Activated CD4-positive, alpha-beta memory T cell treated with anti-CD3 and anti-CD28 coated beads for 36 hours (primary cell): ENCODE measurements at regions of chr1 and their contacts with region 1.

Region 1: DNA sequence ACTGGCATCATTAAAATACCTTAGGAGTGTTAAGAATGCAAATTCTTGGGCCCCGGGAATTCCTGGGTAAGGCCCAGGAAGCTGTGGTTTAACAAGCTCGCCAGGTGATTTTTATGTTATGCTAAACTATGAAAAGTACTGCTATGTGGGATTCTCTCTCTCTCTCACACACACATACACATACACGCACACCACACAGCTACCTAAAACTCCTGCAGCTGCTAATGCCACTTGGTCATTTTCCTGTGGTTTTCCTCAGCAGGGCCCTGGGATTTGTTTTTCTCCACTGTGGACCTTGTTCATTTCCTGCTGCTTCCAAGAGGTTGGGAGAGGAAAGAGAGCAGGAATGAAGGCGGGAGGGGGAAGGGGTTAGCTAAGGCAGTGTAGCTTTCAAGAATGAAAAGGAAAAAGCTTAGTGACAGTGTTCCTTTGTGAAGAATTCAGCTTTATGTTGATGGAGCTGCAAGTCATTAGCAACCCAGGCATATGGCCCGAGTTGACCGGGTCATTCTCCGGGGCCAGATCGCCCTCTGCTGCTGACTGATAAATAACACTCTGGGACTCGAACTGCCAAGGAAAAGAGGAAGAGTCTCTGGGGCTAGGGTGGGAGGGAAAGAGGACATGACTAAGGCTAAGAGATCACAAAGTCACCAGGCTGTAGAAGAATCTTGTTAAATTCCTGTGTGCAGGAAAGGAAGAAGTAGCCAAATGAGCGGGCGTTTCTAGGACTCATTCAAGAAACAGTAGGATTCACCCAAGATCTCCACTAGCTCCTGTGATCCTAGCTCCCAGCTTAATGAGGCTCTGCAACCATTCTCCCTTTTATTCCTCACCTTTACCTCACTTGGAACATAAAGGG is 30.5 kb upstream of the LRIG2 start:
- DNase-seq: peak; percentile 55
- H3K4me3 Mint-ChIP-seq: no peak overlapping the region
- H3K27ac Mint-ChIP-seq: no peak overlapping the region
- H3K4me1 Mint-ChIP-seq: peaks cover 32% of the 10 kb centered on the region
- H3K27me3 Mint-ChIP-seq: no peaks in the 10 kb centered on the region

Region 2: GRCh38 chr1:112882271-112882744 is 160.2 kb before region 1 on chr1:
- CTCF ChIA-PET with region 1: interaction called, 38 read pairs
- POLR2A ChIA-PET with region 1: no interaction called
- intact Hi-C with region 1: loop called (anchors 1 kb)
- DNase-seq: no peak
- H3K4me3 Mint-ChIP-seq: no peak overlapping the region
- H3K27ac Mint-ChIP-seq: no peak overlapping the region
- H3K4me1 Mint-ChIP-seq: no peaks in the 10 kb centered on the region
- H3K27me3 Mint-ChIP-seq: peaks cover 2% of the 10 kb centered on the region